ENCODE measurements at regions of chr6 and their contacts with region 1.

Region 1: GRCh38 chr6:105087571-105088211 is 92.1 kb downstream of the POPDC3 start:
- DNase-seq: peak; percentile 46 to 69 (median 48)
- ATAC-seq: peak; percentile 77
- H3K4me3 ChIP-seq: no peak overlapping the region
- H3K27ac ChIP-seq: no peak overlapping the region
- H3K4me1 ChIP-seq: no peaks in the 10 kb centered on the region
- H3K27me3 ChIP-seq: no peaks in the 10 kb centered on the region
- CTCF ChIP-seq: peak; percentile 46 to 89 (median 66); a peak in 5 of 6 replicates
- EP300 ChIP-seq: no peak
- POLR2A ChIP-seq: no peak
- RAD21 ChIP-seq: peak; percentile 93 to 95

Region 2: DNA sequence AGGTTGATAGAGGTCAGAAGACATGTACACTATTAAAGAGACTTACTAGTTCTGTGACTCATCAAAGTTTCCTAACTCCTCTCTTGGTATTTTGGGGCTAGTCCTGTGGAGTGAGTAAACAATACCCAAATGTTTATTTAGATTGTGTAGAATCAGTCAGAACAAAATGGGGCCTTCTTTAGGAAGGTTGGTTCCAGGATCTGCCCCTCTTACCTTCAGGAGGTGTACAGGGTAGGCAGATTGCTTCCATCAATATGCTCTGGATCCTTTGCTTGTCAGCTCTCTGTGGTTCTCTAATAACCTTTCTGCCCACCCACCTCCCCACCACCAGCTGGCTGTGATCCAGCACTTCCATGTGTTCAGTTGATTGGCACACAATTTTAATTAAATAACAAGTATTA is 14.9 kb before region 1 on chr6:
- CTCF ChIA-PET with region 1: no interaction called
- POLR2A ChIA-PET with region 1: no interaction called
- in situ Hi-C with region 1: no loop called
- intact Hi-C with region 1: no loop called
- DNase-seq: peak in 1 of 4 experiments; percentile 26
- ATAC-seq: peak; percentile 50
- H3K4me3 ChIP-seq: no peak overlapping the region
- H3K27ac ChIP-seq: no peak overlapping the region
- H3K4me1 ChIP-seq: peaks cover 13 to 15% of the 10 kb centered on the region in 2 experiments
- H3K27me3 ChIP-seq: no peaks in the 10 kb centered on the region
- CTCF ChIP-seq: no peak
- EP300 ChIP-seq: no peak
- POLR2A ChIP-seq: no peak
- RAD21 ChIP-seq: no peak

Region 3: GRCh38 chr6:105109955-105110895 is 22.5 kb after region 1 on chr6:
- CTCF ChIA-PET with region 1: no interaction called
- POLR2A ChIA-PET with region 1: no interaction called
- in situ Hi-C with region 1: no loop called
- intact Hi-C with region 1: no loop called
- DNase-seq: no peak
- ATAC-seq: peak; percentile 37; the same call in 1 of the 3 replicates
- H3K4me3 ChIP-seq: no peak overlapping the region
- H3K27ac ChIP-seq: no peak overlapping the region
- H3K4me1 ChIP-seq: no peaks in the 10 kb centered on the region
- H3K27me3 ChIP-seq: peaks cover 17 to 24% of the 10 kb centered on the region in 2 experiments; a peak in 4 of 5 replicates
- CTCF ChIP-seq: no peak
- EP300 ChIP-seq: no peak
- POLR2A ChIP-seq: no peak
- RAD21 ChIP-seq: no peak

Region 4: GRCh38 chr6:105263685-105264610 is 176.3 kb after region 1 on chr6:
- CTCF ChIA-PET with region 1: no interaction called
- POLR2A ChIA-PET with region 1: no interaction called
- in situ Hi-C with region 1: no loop called
- intact Hi-C with region 1: loop called (anchors 5 kb)
- DNase-seq: no peak
- ATAC-seq: no peak
- H3K4me3 ChIP-seq: no peak overlapping the region
- H3K27ac ChIP-seq: no peak overlapping the region
- H3K4me1 ChIP-seq: no peaks in the 10 kb centered on the region
- H3K27me3 ChIP-seq: peaks cover 18 to 29% of the 10 kb centered on the region in 2 experiments; a peak in 4 of 5 replicates
- CTCF ChIP-seq: no peak
- EP300 ChIP-seq: no peak
- POLR2A ChIP-seq: no peak
- RAD21 ChIP-seq: no peak

Region 5: GRCh38 chr6:105363100-105363754 is 275.5 kb after region 1 on chr6:
- CTCF ChIA-PET with region 1: interaction called, 9 read pairs
- POLR2A ChIA-PET with region 1: no interaction called
- in situ Hi-C with region 1: no loop called
- intact Hi-C with region 1: loop called (anchors 2 kb)
- DNase-seq: no peak
- ATAC-seq: no peak
- H3K4me3 ChIP-seq: no peak overlapping the region
- H3K27ac ChIP-seq: no peak overlapping the region
- H3K4me1 ChIP-seq: peaks cover 0 to 4% of the 10 kb centered on the region in 2 experiments; a peak in 1 of 5 replicates
- H3K27me3 ChIP-seq: no peaks in the 10 kb centered on the region
- CTCF ChIP-seq: peak in 1 of 3 experiments; percentile 33; a peak in 3 of 6 replicates
- EP300 ChIP-seq: no peak
- POLR2A ChIP-seq: no peak
- RAD21 ChIP-seq: peak; percentile 30 to 40; a peak in 2 of 4 replicates

Region 6: GRCh38 chr6:105402939-105403935 is 315.5 kb after region 1 on chr6 and contains the start of gene PREP:
- CTCF ChIA-PET with region 1: interaction called, 15 read pairs
- POLR2A ChIA-PET with region 1: no interaction called
- in situ Hi-C with region 1: no loop called
- intact Hi-C with region 1: loop called (anchors 1 kb)
- DNase-seq: peak; percentile 83 to 90 (median 86)
- ATAC-seq: peak; percentile 94
- H3K4me3 ChIP-seq: peak within 1 kb of the TSS; percentile 82
- H3K27ac ChIP-seq: peak within 1 kb of the TSS; percentile 80
- H3K4me1 ChIP-seq: peaks cover 16 to 22% of the 10 kb centered on the region in 2 experiments; a peak in 4 of 5 replicates
- H3K27me3 ChIP-seq: no peaks in the 10 kb centered on the region
- CTCF ChIP-seq: peak; percentile 71 to 95 (median 78)
- EP300 ChIP-seq: no peak
- POLR2A ChIP-seq: peak; percentile 59
- RAD21 ChIP-seq: peak; percentile 13 to 47; a peak in 3 of 4 replicates
- polyA plus RNA-seq, gene PREP: 14.1 to 18.6 TPM

Region 7: DNA sequence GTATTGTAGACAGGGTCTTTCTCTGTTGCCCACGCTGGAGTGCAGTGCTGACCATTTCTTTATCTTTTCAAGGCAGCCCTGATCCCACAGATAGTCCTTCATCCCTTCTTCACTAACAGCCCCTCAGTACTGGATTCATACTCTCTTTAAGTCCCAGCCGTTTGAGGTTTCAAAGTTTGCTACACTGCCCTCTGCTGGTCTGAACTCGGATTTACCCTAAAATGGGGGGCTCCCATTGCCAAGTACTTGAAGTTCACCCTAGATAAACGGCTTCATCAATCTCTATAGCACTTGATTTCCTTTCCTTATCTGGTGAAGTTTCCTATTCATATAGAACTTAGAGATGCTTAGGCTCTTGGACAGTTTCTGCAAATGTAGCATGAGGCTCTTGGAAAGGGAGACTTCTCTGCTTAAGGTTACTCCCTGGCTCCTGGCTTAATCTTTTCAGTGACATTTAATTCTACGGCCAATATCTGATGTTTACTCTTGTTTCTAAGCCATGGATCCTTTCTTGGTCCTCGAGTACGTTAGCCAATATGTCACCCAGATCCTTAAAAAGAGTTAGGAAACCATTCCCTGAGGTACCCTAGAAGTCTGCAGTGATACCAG is 336.6 kb after region 1 on chr6:
- CTCF ChIA-PET with region 1: interaction called, 12 read pairs
- POLR2A ChIA-PET with region 1: interaction called, 3 read pairs
- in situ Hi-C with region 1: loop called (anchors 5 kb)
- intact Hi-C with region 1: loop called (anchors 1 kb)
- DNase-seq: peak; percentile 67 to 72 (median 68)
- ATAC-seq: peak; percentile 95
- H3K4me3 ChIP-seq: no peak overlapping the region
- H3K27ac ChIP-seq: no peak overlapping the region
- H3K4me1 ChIP-seq: no peaks in the 10 kb centered on the region
- H3K27me3 ChIP-seq: peaks cover 0 to 4% of the 10 kb centered on the region in 2 experiments; a peak in 1 of 5 replicates
- CTCF ChIP-seq: peak; percentile 56 to 70 (median 69)
- EP300 ChIP-seq: no peak
- POLR2A ChIP-seq: no peak
- RAD21 ChIP-seq: peak; percentile 50 to 66

Region 8: DNA sequence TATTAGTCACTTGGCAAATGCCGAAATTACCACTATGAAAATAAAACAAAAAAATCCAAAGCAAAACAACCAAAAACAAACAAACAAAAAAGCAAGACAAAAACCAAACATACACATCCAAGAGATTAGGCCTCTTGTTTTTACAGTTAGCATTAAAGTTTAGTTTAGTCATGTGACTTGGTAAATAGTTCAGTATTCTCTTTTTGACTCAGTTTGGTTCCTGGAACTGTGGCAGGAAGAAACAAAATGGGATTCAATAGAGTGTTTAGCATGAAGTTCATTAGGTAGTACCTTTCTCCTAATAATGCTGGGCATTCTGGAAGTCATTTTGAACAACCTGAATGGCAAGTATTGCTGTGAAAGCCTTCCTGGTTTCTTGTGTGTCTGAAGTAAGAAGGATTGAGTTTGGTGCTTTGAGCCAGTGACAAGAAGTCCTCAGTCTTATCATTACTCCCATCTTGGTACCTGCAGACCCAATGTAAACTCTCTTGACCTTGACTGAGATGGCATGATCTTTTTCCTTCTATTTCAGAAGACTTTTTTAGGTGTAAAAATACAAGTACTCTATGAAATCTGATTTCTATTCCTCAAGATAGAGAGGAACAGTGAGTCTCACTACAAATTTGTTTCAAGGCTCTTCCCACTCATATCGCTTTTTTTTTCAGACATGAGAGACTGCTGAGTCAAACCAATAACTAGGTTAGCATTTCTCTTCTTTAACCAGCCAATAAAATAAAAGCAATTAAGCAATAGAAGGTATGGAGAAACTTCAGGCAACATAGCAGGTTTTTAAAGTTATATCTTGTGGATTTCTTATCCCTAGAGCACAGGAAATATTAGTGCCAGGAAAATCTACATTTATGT is 538.8 kb after region 1 on chr6:
- CTCF ChIA-PET with region 1: no interaction called
- POLR2A ChIA-PET with region 1: no interaction called
- in situ Hi-C with region 1: no loop called
- intact Hi-C with region 1: no loop called
- DNase-seq: no peak
- ATAC-seq: no peak
- H3K4me3 ChIP-seq: no peak overlapping the region
- H3K27ac ChIP-seq: no peak overlapping the region
- H3K4me1 ChIP-seq: no peaks in the 10 kb centered on the region
- H3K27me3 ChIP-seq: peaks cover 2 to 4% of the 10 kb centered on the region in 2 experiments; a peak in 2 of 5 replicates
- CTCF ChIP-seq: no peak
- EP300 ChIP-seq: no peak
- POLR2A ChIP-seq: no peak
- RAD21 ChIP-seq: no peak

Region 9: GRCh38 chr6:105824732-105825131 is 737.0 kb after region 1 on chr6:
- CTCF ChIA-PET with region 1: no interaction called
- POLR2A ChIA-PET with region 1: no interaction called
- in situ Hi-C with region 1: no loop called
- intact Hi-C with region 1: no loop called
- DNase-seq: no peak
- ATAC-seq: no peak
- H3K4me3 ChIP-seq: no peak overlapping the region
- H3K27ac ChIP-seq: no peak overlapping the region
- H3K4me1 ChIP-seq: no peaks in the 10 kb centered on the region
- H3K27me3 ChIP-seq: no peaks in the 10 kb centered on the region
- CTCF ChIP-seq: no peak
- EP300 ChIP-seq: no peak
- POLR2A ChIP-seq: no peak
- RAD21 ChIP-seq: no peak

Measured in K562 (cell line).